ENCODE measurements at regions of chr5 and their contacts with region 1.

Region 1: DNA sequence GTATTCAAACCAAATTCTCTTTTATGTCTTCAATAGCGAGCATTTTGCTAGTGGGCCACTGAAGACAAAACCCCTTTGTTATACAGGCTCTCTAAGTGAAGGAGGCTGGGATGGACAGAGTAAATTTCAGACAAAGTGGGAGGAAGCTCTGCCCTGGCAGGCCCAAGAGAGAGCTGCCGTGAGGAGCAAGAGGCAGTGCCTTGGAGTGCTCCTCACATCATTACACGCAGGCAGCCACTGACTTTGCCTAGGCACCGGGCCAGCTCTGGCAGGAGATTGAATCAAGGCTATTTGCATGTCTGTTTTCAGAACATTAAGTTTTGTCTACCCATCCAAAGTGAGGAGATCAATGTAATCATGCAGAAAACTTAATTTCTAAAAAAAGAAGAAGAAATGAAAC is 167.7 kb downstream of the CCDC192 start:
- DNase-seq: no peak
- CTCF ChIP-seq: no peak

Region 2: GRCh38 chr5:127280491-127281220 is 590.3 kb before region 1 on chr5:
- in situ Hi-C with region 1: no loop called
- DNase-seq: no peak
- CTCF ChIP-seq: no peak

Region 3: GRCh38 chr5:127564002-127564769 is 306.7 kb before region 1 on chr5:
- in situ Hi-C with region 1: loop called (anchors 25 kb)
- DNase-seq: peak; percentile 60
- CTCF ChIP-seq: peak; percentile 78

Region 4: GRCh38 chr5:128304088-128304487 is 433.2 kb after region 1 on chr5:
- in situ Hi-C with region 1: no loop called
- DNase-seq: no peak
- CTCF ChIP-seq: no peak